ENCODE measurements at regions of chr1 and their contacts with region 1.

Region 1: DNA sequence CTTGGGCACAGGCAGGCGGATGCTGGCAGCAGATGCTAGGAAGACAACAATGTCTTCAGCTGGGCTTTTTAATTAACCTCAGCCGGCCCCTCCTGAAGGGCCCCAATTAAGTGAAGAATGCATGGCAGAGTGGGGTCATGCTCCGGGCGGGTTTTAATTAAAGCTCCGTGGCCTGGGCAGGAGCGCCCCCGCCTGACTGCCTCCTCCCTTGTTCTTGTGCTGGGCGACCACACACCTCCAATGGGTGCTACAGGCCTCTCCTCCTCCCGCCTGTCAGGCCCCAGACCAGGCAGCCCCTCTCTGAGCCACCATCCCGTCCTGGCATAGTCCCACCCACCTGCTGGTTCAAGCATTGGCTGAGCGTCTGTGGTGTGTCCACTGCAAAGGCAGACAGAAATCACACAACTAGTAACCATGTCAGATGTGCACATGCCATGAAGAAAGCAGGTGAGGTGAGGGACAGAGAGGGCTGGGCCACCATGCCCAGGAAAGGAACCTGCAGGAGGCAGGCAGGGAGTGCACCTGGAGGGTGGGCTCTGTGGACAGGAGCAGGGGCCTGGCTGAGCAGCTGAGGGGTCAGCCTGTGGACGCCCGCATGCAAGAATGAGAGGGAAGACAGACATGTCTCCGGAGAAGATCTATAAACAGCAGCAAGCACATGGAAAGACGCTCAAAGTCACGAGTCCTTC is 8.5 kb upstream of the ARF1 start:
- DNase-seq: no peak
- H3K4me3 ChIP-seq: no peak overlapping the region
- H3K27ac ChIP-seq: no peak overlapping the region
- H3K4me1 ChIP-seq: no peaks in the 10 kb centered on the region
- H3K27me3 ChIP-seq: no peaks in the 10 kb centered on the region
- CTCF ChIP-seq: no peak

Region 2: GRCh38 chr1:228009828-228010775 is 63.9 kb before region 1 on chr1:
- intact Hi-C with region 1: loop called (anchors 5 kb)
- DNase-seq: no peak
- H3K4me3 ChIP-seq: no peak overlapping the region
- H3K27ac ChIP-seq: no peak overlapping the region
- H3K4me1 ChIP-seq: no peaks in the 10 kb centered on the region
- H3K27me3 ChIP-seq: peaks cover 39% of the 10 kb centered on the region
- CTCF ChIP-seq: no peak

Region 3: GRCh38 chr1:228323401-228323800 is 249.4 kb after region 1 on chr1:
- intact Hi-C with region 1: no loop called
- DNase-seq: no peak
- H3K4me3 ChIP-seq: no peak overlapping the region
- H3K27ac ChIP-seq: no peak overlapping the region
- H3K4me1 ChIP-seq: no peaks in the 10 kb centered on the region
- H3K27me3 ChIP-seq: no peaks in the 10 kb centered on the region
- CTCF ChIP-seq: no peak